Activated naive CD4-positive, alpha-beta T cell treated with anti-CD3 and anti-CD28 coated beads, Interleukin-2, amount 10 ng/mL, durations not matched to agents 7 days and 5 days (primary cell): ENCODE measurements at regions of chr1 and their contacts with region 1.

Region 1: DNA sequence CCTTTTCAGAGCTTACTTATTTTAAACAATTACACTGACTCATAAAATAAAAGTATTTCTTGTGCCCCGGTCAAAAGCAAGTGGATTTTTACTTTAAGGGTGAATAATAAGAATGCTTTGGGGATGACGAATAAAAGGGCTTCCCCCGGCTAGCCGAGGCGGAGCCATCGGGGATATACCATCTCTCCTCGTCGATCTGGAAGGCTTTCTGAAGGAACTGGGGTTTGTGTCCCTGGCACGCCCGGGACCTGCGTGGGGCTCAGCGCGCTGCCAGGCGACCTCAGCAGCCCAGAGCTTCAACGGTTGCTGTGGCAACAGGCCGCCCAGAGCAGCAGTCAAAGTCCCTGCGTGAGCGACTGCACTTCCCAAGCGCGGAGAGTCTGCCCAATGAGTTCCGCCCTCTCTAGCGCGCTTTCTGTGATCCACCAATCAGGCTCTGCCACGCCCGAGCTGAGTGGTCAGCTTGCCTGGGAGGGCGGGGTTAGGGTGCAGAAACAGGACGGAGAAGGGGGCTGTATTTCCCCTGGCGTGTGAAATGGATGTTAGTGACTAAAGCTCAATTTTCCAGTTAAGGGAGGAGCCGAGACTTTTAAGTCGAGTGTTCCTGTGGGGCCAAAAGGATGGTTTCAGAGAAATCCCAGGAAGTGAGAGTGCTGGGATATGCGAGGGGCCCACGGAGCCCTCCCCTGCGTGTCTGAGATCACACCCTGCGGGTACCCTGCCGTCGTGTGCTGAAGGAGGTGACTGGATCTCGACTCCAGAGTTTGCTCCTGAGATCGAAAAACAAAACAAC is 33.0 kb upstream of the MGST3 start:
- DNase-seq: peak; percentile 94
- H3K4me3 Mint-ChIP-seq: peak overlapping the region; percentile 83
- H3K27ac Mint-ChIP-seq: peak overlapping the region; percentile 39
- H3K4me1 Mint-ChIP-seq: peaks cover 26% of the 10 kb centered on the region
- H3K27me3 Mint-ChIP-seq: peaks cover 65% of the 10 kb centered on the region

Region 2: DNA sequence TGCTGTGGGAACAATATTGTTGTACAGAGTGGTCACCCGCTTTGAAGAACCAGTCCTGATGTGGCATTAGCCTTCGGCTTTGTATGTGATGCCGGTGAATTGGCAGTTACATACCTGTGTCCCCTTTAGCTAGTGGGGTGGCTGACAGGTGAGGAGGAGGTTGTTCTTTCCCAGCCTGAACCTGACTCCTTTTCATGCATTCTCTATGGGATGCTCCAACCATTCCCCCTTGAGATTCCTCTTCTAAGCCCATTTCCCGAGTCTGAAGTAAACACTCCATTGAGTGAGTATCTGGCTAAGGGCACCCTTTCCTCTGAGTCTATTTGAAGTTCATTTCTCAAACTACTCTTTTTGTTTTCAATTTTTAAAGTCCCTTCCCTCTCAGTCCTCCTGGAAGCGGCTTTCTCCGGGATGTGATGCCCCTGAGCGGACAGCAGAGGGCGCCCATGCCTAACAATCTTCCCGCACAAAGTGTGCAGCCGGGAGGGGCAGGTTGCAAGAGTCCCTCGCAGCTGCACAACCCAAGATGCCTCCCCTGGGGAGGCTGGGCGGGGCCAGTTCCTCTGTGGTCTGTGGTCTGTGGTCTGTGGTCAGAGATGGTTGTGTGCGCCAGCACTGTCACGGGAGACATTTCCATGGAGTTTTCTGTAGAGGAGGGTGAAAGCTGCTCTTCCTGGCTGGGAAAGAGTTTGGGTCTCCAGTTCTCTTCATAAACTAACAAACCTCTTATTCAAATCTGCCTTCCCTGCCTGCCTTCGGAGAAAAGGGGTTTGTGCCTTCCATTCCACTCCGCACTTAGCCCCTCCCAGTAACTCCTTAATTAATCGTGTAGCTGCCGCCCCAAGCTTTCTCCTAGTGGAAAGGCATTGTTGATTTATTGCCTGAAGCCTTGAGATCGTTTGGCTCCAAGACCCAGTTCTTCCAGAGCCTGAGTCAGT is 205.2 kb before region 1 on chr1:
- CTCF ChIA-PET with region 1: interaction called, 59 read pairs
- DNase-seq: peak; percentile 95
- H3K4me3 Mint-ChIP-seq: peak overlapping the region; percentile 57
- H3K27ac Mint-ChIP-seq: peak overlapping the region; percentile 85
- H3K4me1 Mint-ChIP-seq: peaks cover 23% of the 10 kb centered on the region
- H3K27me3 Mint-ChIP-seq: peaks cover 98% of the 10 kb centered on the region

Region 3: DNA sequence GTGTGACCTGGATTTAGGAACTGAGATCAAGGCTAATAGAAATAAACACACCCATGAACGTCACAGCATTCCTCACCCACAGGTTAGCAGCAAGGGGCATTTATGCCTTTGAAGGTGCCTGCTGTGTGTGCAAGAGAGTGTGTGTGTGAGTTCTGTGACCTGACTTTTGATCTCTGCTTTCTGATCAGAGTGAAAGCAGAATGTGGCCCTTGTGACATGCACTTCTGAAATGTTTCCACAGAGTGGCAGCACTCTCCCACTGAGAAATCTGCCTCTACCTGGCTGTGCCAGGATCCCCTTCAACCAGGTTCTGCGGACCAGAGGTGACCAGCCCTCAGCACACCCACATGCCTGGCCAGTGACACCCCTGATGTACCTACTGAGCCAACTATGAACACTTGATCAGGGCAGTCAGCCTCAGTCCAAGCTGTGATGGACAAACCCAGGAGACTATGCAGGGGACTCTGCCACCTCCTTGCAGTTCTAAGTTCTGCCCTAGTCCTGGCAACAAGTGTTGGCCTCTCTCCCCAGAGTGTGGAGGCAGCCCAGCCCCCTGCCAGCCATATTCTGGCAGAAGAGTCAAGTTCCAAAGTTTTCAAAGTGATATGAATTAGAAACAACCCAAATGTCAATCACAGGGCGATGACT is 194.1 kb before region 1 on chr1:
- CTCF ChIA-PET with region 1: interaction called, 54 read pairs
- DNase-seq: peak; percentile 57
- H3K4me3 Mint-ChIP-seq: no peak overlapping the region
- H3K27ac Mint-ChIP-seq: no peak overlapping the region
- H3K4me1 Mint-ChIP-seq: peaks cover 2% of the 10 kb centered on the region
- H3K27me3 Mint-ChIP-seq: peaks cover 60% of the 10 kb centered on the region

Region 4: DNA sequence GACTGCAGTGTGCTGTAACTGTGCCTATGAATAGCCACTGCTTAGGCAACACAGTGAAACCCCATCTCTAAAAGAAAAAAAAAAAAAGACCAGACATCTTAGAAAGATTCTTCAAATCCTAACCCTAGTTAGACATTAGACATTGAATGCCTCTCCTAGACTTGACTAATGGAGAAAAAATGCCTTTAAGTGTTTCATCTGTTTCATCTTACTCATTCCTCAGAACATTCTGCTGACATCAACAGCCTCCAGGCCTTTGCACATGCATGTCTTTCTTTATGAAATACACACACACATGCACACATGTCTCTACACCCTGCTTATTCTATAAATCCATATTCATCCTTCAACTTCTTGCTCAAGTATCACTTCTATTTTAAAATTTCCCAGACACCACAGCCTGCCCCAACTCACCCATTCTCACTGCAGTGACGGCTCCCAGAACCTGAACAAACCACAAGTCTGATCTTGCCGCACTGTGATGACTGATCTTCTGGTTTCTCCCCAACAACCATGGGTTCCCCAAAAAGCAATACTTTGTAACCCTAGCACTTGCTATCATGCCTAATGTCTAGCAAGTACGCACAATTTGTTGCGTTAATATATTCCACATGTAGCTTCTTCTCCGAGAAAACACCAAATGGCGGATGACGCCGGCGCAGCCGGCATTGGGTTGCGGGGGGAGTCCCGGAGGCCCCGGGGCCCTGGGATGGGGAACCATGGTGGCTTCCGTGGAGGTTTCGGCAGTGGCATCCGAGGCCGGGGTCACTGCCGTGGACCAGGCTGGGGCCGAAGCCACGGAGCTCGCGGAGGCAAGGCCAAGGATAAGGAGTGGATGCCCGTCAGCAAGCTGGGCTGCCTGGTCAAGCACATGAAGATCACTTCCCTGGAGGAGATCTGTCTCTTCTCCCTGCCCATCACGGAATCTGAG is 16.9 kb before region 1 on chr1:
- CTCF ChIA-PET with region 1: interaction called, 12 read pairs
- DNase-seq: no peak
- H3K4me3 Mint-ChIP-seq: no peak overlapping the region
- H3K27ac Mint-ChIP-seq: no peak overlapping the region
- H3K4me1 Mint-ChIP-seq: no peaks in the 10 kb centered on the region
- H3K27me3 Mint-ChIP-seq: peaks cover 28% of the 10 kb centered on the region

Region 5: DNA sequence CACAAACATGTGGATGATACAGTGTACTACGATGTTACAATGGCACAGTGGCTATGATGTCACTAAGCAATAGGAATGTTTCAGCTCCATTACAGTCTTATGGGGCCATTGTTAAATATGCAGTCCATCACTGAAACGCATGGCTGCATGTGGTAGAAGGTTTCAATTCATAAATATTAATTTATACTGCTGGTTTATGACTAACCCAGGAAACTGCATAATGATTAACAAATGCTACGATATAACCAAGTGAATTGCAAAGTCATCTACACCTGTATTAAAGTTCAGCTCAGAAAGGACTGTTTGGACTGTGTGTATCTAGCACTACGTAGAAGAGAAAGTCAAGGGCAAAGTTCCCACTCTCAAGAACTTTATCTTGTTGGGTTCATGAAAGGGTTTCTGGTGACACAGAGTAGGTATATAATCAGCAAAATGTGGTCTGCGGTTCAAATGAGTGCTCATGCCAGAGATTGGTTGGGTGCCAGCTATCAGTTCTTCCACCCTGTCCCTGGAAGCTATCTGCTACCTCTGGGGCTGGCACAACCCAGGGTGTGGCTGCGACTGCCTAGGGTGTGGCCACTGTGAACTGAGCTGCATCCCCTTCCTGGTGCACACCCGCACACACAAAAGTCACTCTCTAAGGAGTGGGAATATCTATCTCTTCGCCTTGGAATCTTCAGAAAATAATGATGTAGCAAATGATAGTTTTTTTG is 47.7 kb after region 1 on chr1:
- CTCF ChIA-PET with region 1: no interaction called
- DNase-seq: no peak
- H3K4me3 Mint-ChIP-seq: no peak overlapping the region
- H3K27ac Mint-ChIP-seq: no peak overlapping the region
- H3K4me1 Mint-ChIP-seq: peaks cover 17% of the 10 kb centered on the region
- H3K27me3 Mint-ChIP-seq: no peaks in the 10 kb centered on the region

Region 6: DNA sequence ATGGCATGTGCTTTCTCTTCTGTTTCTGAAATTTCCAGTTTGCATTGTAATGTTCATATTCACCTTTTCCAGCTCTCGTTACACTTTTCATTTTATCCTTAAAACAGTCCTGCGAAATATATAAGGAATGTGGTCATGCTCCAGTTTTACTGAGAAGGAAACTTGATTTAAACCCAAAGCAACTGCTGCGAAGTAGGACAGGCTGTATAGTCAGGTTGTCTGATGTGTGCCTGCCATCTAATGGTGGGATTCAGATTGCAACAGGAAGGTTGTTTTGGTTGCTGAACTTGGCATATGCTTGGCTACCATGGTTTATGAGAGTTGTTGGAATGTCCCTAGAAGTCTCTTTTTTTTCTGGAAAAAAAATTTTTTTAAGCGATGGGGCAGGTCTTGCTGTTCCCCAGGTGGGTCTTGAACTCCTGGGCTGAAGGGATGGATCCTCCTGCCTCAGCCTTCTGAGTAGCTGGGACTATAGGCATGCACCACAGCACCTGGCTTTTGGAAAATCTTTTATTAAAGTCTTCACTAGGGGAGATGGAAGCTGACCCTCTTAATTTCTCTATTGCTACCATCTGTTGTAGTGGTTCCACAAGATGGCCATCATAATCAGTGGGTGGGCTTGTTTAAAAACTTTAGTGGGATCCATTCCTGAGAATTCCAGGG is 316.2 kb after region 1 on chr1:
- CTCF ChIA-PET with region 1: interaction called, 70 read pairs
- DNase-seq: peak; percentile 81
- H3K4me3 Mint-ChIP-seq: no peak overlapping the region
- H3K27ac Mint-ChIP-seq: no peak overlapping the region
- H3K4me1 Mint-ChIP-seq: no peaks in the 10 kb centered on the region
- H3K27me3 Mint-ChIP-seq: no peaks in the 10 kb centered on the region

Region 7: DNA sequence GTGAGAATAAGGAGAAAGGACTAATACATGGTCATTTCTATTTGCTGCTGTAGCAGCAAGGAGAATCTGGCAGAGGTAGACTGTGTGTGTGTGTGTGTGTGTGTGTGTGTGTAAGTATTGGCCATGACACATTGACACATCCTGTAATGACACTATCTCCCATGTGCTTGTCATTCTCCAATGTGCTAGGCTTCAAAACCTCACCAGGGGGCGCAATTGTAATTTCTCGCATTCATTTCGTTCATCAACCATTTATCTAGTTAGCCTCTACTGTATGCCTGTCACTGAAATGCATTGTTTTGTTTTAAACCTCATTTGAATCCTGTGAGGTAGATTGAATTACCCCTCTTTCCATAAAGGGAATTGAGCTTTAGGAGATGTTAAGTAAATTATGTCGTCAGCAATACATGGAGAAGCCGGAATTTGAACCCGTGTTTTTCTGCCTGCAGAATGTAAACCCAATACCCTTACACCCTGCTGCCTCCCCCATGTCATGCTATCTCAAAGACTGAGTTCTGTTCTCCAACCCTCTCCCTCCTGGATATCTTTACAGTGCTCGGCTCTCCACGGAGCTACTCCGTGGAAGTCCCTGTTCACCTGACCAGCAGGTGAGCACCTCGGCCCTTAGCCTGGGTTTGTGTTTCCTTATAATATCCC is 330.1 kb after region 1 on chr1:
- CTCF ChIA-PET with region 1: interaction called, 13 read pairs
- DNase-seq: peak; percentile 71
- H3K4me3 Mint-ChIP-seq: no peak overlapping the region
- H3K27ac Mint-ChIP-seq: no peak overlapping the region
- H3K4me1 Mint-ChIP-seq: no peaks in the 10 kb centered on the region
- H3K27me3 Mint-ChIP-seq: peaks cover 24% of the 10 kb centered on the region